SK-N-SH (cell line): ENCODE measurements at regions of chr2 and their contacts with region 1.

Region 1: DNA sequence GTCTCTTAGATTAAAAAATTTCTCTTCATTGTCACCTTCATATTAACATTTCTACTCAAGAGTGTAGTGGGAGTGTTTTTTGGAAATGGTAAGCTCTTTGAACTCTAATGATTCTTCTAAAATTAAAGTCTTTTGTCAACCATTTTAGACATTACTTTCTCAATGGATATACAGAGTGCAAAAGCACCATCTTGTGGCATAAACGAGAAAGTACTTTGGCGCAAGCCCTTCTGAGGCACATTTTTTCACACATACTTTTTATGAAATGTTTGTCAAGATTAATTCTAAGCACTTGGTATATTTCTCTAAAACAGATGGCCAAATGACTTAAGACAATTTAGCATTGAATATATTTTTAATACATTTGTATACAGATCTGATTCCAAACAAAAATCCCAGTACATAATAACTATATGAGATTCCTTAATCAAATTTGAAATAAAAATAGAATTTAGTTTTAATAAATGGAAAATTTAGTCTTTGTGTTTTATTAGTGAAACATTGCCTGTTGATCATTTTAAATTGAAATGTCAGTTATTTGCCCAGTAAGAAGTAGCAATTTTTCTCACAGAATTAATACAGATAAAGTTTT is 63.3 kb upstream of the GALNT5 start:
- DNase-seq: peak; percentile 12
- H3K4me3 ChIP-seq: no peak overlapping the region; a peak in 1 of 4 replicates
- H3K27ac ChIP-seq: no peak overlapping the region
- H3K4me1 ChIP-seq: peaks cover 0 to 6% of the 10 kb centered on the region in 2 experiments; a peak in 1 of 4 replicates
- H3K27me3 ChIP-seq: no peaks in the 10 kb centered on the region
- CTCF ChIP-seq: peak; percentile 89
- EP300 ChIP-seq: no peak
- RAD21 ChIP-seq: peak; percentile 81

Region 2: DNA sequence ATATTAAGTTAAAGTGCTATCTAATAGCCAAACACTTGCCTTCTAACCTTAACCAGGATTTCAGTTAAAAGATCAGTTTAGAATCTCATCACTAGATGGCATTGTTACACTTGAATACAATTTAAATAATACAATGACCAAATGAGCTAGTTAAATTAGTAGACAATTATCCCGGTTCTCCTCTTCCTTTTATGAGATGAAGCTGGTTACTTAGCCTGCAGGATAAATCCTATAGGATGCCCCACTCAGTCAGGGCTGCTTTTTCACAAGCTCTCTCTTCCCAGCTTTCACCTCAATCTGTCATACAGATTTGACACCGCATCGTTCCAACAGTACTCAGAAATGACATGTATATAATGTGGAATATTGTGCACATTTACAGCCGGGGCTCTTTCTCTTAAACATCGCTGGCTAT is 1816.9 kb before region 1 on chr2:
- CTCF ChIA-PET with region 1: interaction called, 18 read pairs
- POLR2A ChIA-PET with region 1: no interaction called
- DNase-seq: no peak
- H3K4me3 ChIP-seq: no peak overlapping the region
- H3K27ac ChIP-seq: no peak overlapping the region
- H3K4me1 ChIP-seq: no peaks in the 10 kb centered on the region
- H3K27me3 ChIP-seq: no peaks in the 10 kb centered on the region
- CTCF ChIP-seq: peak; percentile 60
- EP300 ChIP-seq: no peak
- RAD21 ChIP-seq: peak; percentile 65

Region 3: GRCh38 chr2:157170299-157170698 is 23.9 kb before region 1 on chr2:
- CTCF ChIA-PET with region 1: no interaction called
- POLR2A ChIA-PET with region 1: no interaction called
- DNase-seq: no peak
- H3K4me3 ChIP-seq: no peak overlapping the region
- H3K27ac ChIP-seq: no peak overlapping the region
- H3K4me1 ChIP-seq: peaks cover 0 to 17% of the 10 kb centered on the region in 2 experiments; a peak in 3 of 4 replicates
- H3K27me3 ChIP-seq: no peaks in the 10 kb centered on the region
- CTCF ChIP-seq: no peak
- EP300 ChIP-seq: no peak
- RAD21 ChIP-seq: no peak

Region 4: DNA sequence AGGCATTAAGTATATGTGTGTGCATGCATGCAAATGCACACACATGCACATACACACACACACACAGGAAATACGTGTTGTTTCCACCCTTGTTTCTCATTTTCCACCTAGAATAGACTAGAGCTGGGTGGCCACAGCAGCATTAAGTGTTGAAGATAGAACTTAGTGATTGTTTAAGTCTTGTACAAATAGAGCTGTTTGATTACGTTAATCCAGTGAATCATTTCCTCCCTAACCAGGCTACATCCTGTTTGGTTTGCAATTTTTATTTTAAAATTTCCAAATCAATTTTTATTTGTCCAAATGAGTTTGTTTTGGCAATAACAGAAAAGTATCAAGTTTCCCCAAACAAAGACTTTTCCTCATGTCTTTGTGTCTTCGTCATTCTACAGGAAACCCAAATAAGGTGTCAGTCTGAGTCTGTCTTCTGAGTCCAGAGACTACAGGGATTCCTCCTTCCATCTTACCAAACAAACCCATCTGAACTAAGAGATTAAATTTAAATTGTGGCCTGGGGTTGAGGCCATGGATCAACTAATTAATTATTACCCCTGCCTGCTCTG is 11.3 kb before region 1 on chr2:
- CTCF ChIA-PET with region 1: interaction called, 14 read pairs
- POLR2A ChIA-PET with region 1: no interaction called
- DNase-seq: no peak
- H3K4me3 ChIP-seq: peak overlapping the region in 1 of 2 experiments; percentile 4; a peak in 1 of 4 replicates
- H3K27ac ChIP-seq: peak overlapping the region; percentile 25 to 94; a peak in 3 of 4 replicates
- H3K4me1 ChIP-seq: peaks cover 0 to 10% of the 10 kb centered on the region in 2 experiments; a peak in 3 of 4 replicates
- H3K27me3 ChIP-seq: no peaks in the 10 kb centered on the region
- CTCF ChIP-seq: no peak
- EP300 ChIP-seq: peak; percentile 9 to 81; a peak in 2 of 4 replicates
- RAD21 ChIP-seq: no peak

Region 5: DNA sequence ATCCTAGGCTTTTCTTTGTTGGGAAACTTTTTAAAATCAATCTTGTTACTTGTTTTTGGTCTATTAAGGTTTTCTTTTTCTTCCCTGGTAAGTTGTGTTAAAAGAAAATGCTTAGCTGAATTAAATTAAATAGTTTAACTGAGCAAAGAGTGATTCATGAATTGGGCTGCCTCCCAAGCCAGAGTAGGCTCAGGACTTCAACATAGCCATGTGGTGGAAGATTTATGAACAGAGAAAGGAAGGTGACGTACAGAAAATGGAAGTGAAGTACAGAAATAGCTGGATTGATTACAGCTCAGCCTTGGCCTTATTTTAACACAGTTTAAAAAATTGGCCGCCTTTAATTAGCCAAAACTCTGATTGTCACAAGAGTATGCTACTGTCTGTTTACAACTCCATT is 35.4 kb after region 1 on chr2:
- CTCF ChIA-PET with region 1: no interaction called
- POLR2A ChIA-PET with region 1: no interaction called
- DNase-seq: no peak
- H3K4me3 ChIP-seq: no peak overlapping the region
- H3K27ac ChIP-seq: peak overlapping the region; percentile 58 to 67; a peak in 3 of 4 replicates
- H3K4me1 ChIP-seq: peaks cover 0 to 5% of the 10 kb centered on the region in 2 experiments; a peak in 1 of 4 replicates
- H3K27me3 ChIP-seq: no peaks in the 10 kb centered on the region
- CTCF ChIP-seq: no peak
- EP300 ChIP-seq: peak in 1 of 2 experiments; percentile 53; a peak in 1 of 4 replicates
- RAD21 ChIP-seq: no peak